PC-9 (cell line): ENCODE measurements at regions of chr12 and their contacts with region 1.

Region 1: DNA sequence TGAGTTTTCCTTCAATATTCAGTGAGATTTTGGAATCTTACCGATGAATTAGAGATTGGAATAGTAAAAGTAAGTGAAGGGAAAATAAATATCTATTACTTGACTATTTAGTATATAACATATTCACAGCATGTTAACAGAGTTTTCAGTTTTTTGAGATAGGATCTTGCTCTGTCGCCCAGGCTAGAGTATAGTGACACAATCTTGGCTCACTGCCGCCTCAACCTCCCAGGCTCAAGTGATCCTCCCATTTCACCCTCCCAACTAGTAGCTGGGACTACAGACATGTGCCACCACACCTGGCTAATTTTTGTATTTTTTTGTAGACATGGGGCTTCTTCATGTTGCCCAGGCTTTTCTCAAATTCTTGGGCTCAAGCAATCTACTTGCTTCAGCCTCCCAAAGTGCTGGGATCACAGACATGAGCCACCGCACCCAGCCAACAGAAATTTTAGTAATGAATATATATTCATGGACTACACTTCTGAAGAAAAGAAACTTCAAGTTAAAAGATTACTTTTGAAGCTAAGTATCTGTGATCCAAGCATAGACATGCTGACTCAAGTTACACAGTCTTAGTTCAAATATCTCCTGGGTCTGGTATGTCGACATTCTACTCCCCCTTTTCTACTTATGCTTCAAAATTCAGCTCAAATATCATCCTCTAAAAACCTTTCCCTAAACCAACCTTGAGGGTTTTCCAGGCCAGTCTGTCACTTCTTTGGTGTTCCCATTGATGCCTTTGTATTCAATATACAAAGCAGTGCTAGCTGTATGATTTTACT is 13.8 kb downstream of the UBE2N start:
- DNase-seq: no peak
- H3K4me3 ChIP-seq: no peak overlapping the region
- H3K27ac ChIP-seq: no peak overlapping the region
- H3K4me1 ChIP-seq: no peaks in the 10 kb centered on the region; the same call in 1 of the 2 replicates
- H3K27me3 ChIP-seq: no peaks in the 10 kb centered on the region
- CTCF ChIP-seq: no peak

Region 2: GRCh38 chr12:93015871-93016751 is 411.9 kb before region 1 on chr12:
- CTCF ChIA-PET with region 1: no interaction called
- POLR2A ChIA-PET with region 1: interaction called, 37 read pairs
- intact Hi-C with region 1: no loop called
- DNase-seq: peak; percentile 28 to 81
- H3K4me3 ChIP-seq: 0 out of 2 replicates have a peak overlapping the region, but pooled peaks have one; percentile 10
- H3K27ac ChIP-seq: peak overlapping the region; percentile 11; the same call in 1 of the 2 replicates
- H3K4me1 ChIP-seq: peaks cover 44% of the 10 kb centered on the region
- H3K27me3 ChIP-seq: no peaks in the 10 kb centered on the region
- CTCF ChIP-seq: no peak